Vagina (tissue), 2 donors: ENCODE measurements at regions of chr7 and their contacts with region 1.

Region 1: GRCh38 chr7:22110227-22110839 is 164.6 kb upstream of the CDCA7L start:
- DNase-seq: no peak
- H3K4me3 ChIP-seq: no peak overlapping the region
- H3K27ac ChIP-seq: no peak overlapping the region
- H3K4me1 ChIP-seq: no peaks in the 10 kb centered on the region
- H3K27me3 ChIP-seq: no peaks in the 10 kb centered on the region
- CTCF ChIP-seq: peak; percentile 88
- POLR2A ChIP-seq: no peak

Region 2: DNA sequence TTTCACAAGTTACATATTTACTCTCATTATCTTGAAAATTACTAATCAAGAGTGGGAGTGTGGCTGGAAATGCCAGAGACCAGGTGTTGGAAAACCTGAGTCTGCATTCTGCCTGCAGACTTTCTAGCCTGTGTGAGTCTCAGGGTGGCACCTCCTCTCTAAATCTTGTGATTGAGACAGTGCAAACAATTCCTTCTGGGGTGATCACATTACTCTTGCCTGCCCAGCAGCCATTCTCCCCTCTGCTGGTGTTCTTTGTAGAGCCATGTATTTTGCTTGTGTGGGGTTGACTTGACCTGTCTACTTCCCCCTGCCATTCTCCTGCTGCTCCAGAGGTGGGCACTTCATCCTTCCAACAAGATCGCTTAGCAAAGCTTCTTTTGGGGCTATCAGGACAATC is 145.5 kb after region 1 on chr7:
- intact Hi-C with region 1: loop called (anchors 10 kb)
- DNase-seq: no peak
- H3K4me3 ChIP-seq: no peak overlapping the region
- H3K27ac ChIP-seq: no peak overlapping the region
- H3K4me1 ChIP-seq: no peaks in the 10 kb centered on the region
- H3K27me3 ChIP-seq: no peaks in the 10 kb centered on the region
- CTCF ChIP-seq: no peak
- POLR2A ChIP-seq: no peak

Region 3: DNA sequence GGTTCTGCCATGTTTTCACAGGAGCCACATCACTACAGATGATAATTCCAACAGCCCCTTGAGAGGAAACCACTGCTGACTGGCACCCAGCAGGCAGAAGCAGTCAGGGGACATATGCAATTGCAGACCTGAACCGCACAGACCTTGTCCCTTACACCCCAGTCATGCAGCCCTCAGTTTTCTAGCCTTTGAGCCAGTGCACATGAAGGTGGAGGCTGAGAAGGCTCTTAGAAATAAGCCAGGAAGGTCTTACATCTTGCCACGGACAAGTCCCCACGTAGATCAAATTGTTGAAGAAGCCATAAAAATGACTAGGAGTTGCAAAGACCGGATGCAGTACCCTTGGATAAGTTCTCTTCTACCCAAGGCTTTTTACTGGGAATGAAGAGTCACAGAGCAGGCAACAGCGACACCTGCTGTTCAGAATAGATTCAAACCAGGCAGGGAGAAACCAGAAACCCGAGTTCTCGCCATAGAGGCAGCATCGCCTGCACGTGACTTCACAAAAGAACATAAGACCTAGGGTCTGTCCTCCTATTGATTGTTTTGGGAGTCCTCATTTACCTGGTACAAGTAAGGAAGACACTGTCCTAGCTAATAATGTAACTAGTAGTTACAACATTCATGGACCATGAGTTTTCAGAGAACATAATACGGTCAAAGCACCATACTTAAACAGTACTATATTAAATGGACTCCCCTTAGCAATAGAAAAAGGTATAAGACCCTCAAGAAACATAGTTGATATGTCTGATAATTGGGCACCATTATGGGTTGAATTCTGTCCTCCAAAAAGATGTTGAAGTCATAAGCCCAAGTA is 378.5 kb after region 1 on chr7:
- intact Hi-C with region 1: loop called (anchors 5 kb)
- DNase-seq: no peak
- H3K4me3 ChIP-seq: no peak overlapping the region
- H3K27ac ChIP-seq: no peak overlapping the region
- H3K4me1 ChIP-seq: no peaks in the 10 kb centered on the region
- H3K27me3 ChIP-seq: no peaks in the 10 kb centered on the region
- CTCF ChIP-seq: peak; percentile 55 to 89 (median 81)
- POLR2A ChIP-seq: no peak